Activated CD4-positive, alpha-beta memory T cell treated with anti-CD3 and anti-CD28 coated beads for 36 hours (primary cell): ENCODE measurements at regions of chr3 and their contacts with region 1.

Region 1: DNA sequence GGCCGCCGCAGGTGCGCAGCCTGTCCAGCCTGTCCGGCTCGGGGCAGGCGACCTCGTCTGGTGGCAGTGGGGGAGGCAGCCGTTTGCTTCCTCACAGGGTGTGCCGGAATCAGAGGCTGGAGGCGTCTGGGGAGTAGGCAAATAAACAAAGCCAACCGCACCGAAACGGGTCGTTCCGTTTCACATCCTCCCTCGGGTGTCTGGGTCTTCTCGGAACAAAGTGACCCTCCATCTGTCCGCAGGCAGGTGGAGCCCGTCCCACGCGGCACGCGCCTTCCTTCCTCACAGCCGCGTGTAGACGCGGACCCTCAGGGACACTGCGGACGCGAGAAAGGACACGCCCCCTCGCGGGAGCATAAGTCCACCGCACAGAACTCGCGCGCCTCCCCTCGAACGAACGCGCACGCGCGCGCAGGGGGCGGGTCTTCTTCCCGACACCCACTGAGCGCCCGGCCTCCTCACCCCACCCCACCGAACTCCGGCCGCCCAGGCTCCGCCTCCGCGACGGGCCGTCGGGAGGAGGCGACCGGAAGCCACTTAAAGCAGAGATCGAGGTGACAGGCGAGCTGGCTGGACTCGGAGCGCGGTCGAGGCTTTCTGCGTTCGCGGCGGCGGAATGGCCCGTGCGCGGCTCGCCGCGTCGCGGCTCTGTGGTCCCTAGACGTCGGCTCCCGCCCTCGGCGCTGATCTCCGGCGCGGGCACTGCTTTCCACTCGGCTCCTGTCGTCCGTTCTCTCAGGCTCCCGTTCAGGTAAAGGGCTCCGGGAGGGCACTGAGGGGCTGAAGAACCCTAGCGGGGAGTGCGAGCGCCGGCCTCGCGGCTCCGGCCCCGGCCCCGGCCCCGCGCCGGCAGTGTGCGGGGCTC is at the start of gene TIPARP:
- DNase-seq: peak; percentile 99
- H3K4me3 Mint-ChIP-seq: peak within 1 kb of the TSS; percentile 90
- H3K27ac Mint-ChIP-seq: peak within 1 kb of the TSS; percentile 94
- H3K4me1 Mint-ChIP-seq: peaks cover 36% of the 10 kb centered on the region
- H3K27me3 Mint-ChIP-seq: no peaks in the 10 kb centered on the region
- total RNA-seq, gene TIPARP: 15.7 to 17.7 TPM

Region 2: DNA sequence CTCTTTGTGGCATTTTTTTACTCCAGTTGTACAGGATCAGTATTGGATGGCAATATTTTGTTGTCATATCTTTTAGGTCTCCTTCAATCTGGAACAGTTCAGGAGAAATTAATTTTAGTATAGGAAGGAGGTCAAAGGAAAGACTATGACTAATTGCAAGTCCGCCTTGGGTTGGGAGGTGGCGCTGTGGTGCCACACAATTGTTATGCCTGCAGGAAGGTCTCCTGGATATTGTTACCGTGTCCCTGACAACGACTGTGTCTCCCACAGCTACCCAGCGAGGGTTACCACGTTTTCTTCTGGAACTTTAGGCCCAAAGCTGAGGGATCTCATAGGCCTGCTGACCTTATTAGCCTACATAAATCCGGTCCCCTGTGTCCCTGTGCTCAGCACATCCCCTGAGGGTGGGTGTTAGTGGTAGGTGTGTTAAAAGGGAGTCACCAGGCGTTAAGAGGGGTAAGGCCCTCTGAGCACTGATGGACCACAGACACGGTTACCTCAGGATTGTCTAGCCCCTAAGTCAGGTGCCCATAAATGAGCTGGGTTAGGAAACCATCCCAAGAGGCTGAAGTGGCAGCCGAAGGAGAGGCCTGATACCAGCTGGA is 522.4 kb before region 1 on chr3:
- CTCF ChIA-PET with region 1: interaction called, 3 read pairs
- POLR2A ChIA-PET with region 1: no interaction called
- intact Hi-C with region 1: loop called (anchors 5 kb)
- DNase-seq: peak; percentile 73
- H3K4me3 Mint-ChIP-seq: no peak overlapping the region
- H3K27ac Mint-ChIP-seq: no peak overlapping the region
- H3K4me1 Mint-ChIP-seq: peaks cover 3% of the 10 kb centered on the region
- H3K27me3 Mint-ChIP-seq: no peaks in the 10 kb centered on the region

Region 3: DNA sequence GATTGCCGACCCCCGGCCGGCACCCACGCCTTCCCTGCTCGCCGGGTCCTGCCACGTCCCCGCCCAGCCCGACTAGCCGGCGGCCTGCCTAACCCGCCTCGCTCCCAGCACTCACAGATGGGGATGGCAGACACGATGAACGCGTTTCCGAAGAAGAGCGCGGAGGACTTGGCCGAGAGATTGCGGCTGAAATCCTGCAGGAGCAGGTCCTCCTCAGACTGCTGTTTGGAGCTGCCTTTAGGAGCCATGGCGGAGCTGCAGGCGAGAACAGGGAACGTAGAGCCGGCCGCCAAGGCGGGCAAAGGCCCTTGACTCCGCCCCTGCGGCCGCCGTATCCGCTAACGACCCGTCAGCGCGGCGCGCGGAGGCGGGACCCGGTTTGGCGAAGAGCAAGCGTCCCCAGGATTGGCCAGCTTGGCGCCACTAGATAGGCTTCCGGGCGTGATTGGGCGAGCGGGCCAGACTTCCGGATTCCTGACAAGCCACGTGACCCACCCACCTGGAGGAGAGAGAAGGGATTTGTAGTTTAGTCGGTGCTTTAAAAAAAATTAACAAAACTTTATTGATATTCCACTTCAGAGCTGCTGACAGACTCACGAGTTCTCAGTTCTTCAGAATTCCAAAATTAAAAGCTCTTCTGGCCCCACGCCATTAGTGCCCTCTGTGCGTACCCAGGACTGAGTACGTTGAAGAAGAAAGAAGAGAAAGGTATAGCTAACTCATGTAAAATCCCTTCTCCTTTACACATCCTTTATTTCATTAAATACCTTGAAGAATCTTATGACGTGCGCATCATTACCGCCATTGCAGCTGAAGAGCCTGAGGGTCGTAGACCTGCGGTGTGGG is 119.2 kb before region 1 on chr3 and contains the start of gene SSR3:
- CTCF ChIA-PET with region 1: interaction called, 38 read pairs
- POLR2A ChIA-PET with region 1: interaction called, 15 read pairs
- intact Hi-C with region 1: loop called (anchors 1 kb)
- DNase-seq: peak; percentile 99
- H3K4me3 Mint-ChIP-seq: peak within 1 kb of the TSS; percentile 97
- H3K27ac Mint-ChIP-seq: peak within 1 kb of the TSS; percentile 88
- H3K4me1 Mint-ChIP-seq: peaks cover 46% of the 10 kb centered on the region
- H3K27me3 Mint-ChIP-seq: no peaks in the 10 kb centered on the region
- total RNA-seq, gene SSR3: 162 to 170 TPM

Region 4: DNA sequence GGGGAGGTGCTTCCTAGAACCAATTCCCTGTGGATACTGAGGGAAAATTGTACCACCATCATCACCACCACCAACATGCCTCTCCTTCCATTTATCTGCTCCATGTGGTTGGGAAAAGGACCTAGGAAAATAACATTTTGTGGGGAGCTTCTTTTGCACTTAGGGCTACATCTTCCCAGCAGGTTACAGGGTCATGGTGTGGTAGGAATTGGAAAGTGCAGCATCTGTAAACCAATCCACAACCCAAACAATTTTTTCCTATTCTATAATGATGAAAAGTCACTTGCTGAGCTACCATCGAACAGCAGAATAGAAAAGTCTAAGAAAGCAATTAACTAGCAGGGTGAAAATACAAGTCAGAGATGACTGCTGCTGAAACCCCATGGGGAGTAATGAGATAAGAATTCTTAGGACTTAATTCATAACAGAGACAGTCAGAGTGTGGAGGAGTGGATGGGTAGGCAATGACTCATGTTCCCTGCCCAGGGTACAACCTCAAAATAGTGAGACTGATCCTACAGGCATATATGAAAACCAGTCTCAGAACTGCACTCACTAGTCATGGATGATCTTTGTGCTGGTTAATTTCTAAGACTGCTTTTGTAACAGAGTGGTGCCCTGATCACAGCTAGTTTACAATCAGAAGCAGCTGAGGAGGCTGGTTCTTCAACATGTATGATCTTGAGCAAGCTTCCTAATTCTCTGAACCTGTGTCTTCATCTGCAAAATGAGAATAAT is 113.8 kb after region 1 on chr3:
- CTCF ChIA-PET with region 1: no interaction called
- POLR2A ChIA-PET with region 1: interaction called, 3 read pairs
- intact Hi-C with region 1: loop called (anchors 2 kb)
- DNase-seq: peak; percentile 71
- H3K4me3 Mint-ChIP-seq: no peak overlapping the region
- H3K27ac Mint-ChIP-seq: no peak overlapping the region
- H3K4me1 Mint-ChIP-seq: peaks cover 27% of the 10 kb centered on the region
- H3K27me3 Mint-ChIP-seq: no peaks in the 10 kb centered on the region

Region 5: GRCh38 chr3:157088601-157089454 is 414.6 kb after region 1 on chr3:
- CTCF ChIA-PET with region 1: interaction called, 22 read pairs
- POLR2A ChIA-PET with region 1: interaction called, 17 read pairs
- intact Hi-C with region 1: loop called (anchors 1 kb)
- DNase-seq: peak; percentile 96
- H3K4me3 Mint-ChIP-seq: peak overlapping the region; percentile 72
- H3K27ac Mint-ChIP-seq: peak overlapping the region; percentile 96
- H3K4me1 Mint-ChIP-seq: peaks cover 64% of the 10 kb centered on the region
- H3K27me3 Mint-ChIP-seq: no peaks in the 10 kb centered on the region

Region 6: DNA sequence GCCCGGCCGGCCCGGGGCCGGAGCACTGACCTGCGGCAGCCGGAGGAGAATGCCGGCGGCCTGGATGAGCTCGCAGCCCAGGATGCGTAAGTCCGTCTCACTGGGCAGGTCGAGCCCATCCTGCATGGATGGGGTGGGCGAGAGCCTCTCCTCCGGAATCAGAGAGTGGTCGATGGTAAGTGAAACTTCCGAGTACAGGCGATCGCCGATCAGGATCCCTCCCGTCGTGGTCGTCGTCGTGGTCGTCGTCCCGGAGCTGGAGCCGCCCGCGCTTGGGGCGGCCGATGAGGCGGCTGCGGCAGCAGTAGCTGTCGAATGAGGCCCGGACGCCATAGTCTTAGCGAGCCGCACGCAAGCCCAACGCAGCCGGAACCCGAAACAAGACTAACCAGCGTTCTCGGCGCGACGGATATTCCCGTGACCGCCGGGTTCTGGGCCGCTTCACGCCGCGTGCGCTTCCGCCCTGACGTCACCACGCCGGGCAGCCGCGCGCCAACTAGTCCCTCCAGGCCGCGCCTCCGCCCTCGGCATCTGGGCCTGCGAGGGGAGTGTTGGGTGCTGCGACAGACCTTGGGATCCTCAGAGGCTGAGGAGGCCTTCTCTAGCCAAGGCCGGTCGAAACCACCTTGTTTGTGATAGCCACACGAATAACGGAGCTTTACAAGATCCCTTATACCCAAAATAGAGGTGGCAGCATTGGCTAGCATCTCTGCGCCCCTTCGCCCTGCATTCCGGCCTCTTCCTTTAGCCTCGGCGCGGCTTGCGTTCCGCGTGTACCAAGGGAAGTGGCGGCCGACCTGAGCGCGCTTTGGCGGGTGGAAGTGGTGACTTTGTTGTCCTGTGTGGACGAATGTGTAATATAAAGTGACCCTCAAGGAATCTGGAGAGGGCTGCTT is 485.7 kb after region 1 on chr3 and contains the start of gene CCNL1:
- CTCF ChIA-PET with region 1: interaction called, 7 read pairs
- POLR2A ChIA-PET with region 1: interaction called, 23 read pairs
- intact Hi-C with region 1: loop called (anchors 1 kb)
- DNase-seq: peak; percentile 96
- H3K4me3 Mint-ChIP-seq: peak within 1 kb of the TSS; percentile 94
- H3K27ac Mint-ChIP-seq: peak within 1 kb of the TSS; percentile 99
- H3K4me1 Mint-ChIP-seq: peaks cover 46% of the 10 kb centered on the region
- H3K27me3 Mint-ChIP-seq: peaks cover 2% of the 10 kb centered on the region
- total RNA-seq, gene CCNL1: 144 to 150 TPM